ENCODE measurements at regions of chr9 and their contacts with region 1.

Region 1: DNA sequence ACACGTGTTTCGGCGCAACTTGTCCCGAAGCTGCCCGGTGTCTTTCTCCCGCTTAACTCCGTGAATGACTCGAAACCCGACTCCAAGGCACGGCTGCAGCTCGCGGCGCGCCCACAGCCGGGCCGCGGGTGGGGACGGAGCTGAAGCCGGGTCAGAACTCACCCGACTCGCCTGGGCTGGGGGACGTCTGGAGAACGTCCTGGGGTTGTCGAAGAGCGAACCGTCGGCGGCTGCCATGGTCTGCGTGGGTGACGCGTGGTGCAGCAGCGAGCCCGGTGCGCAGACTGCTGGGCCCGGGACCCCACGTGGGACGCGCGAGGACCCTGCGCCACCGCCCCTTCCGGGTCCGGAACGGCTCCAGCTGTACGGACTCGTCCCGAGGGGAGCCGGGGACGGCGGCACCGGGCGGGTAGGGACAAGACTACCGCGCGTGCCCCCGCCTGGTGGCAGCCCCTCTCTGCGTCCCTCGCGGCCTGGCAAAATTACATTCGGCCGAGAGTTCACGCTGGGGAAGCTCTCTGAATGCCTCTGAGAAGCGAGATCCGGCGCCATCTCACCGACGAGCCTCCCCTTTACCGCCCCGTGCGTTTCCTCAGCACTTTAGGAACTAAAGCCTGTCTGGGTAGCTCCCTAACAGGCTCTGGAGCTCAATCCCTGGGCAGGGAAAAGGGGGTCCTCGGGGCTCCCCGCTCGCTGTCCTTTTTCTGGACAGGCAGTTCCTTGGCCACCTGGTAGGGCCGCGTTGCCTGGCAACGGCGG is at the start of gene DDX31:
- DNase-seq: peak; percentile 76 to 95 (median 88)
- ATAC-seq: peak; percentile 87 to 88
- H3K4me3 Mint-ChIP-seq: peak within 1 kb of the TSS; percentile 86 to 95 (median 90)
- H3K27ac Mint-ChIP-seq: peak within 1 kb of the TSS; percentile 80 to 97 (median 96)
- H3K4me1 Mint-ChIP-seq: peaks cover 28 to 70% (median 58%) of the 10 kb centered on the region in 4 donors
- H3K27me3 Mint-ChIP-seq: no peaks in the 10 kb centered on the region
- polyA plus RNA-seq, gene DDX31: 6.2 to 9.7 (median 7.6) TPM

Region 2: DNA sequence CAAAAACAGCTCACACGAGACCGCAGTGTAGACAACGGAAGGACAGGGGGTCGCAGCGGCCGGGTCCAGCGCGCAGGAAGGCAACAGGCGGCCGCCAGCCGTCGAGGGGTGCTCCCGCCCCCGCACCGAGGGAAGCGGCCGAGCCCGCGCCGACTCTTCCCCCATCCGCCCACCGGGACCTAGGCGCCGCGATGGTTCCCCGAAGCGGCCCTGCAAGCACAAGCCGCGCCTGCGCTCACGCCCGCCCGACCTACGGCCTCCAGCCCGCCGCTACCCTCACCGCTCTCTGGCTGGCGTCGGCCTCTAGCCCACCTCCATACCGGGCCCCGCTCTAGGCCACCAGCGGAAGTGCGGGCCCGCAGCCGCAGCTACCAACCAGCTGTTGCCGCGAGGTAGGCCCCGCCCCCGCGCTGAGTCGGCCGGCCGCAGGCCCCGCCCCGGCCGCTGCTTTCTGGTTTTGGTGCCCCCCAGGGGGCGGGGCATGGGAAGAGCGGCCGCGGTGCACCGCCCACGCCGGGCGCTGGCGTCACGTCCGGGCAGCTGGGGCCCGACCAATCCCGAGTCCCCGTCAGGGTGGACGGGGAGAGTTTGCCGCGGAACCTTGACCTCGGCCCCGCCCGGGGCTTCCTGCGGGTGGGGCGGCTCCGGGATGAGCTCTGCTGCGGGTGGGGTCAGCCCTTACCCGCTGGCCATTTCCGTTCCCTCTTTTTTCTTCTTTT is 315.1 kb before region 1 on chr9 and contains the start of gene SETX:
- POLR2A ChIA-PET with region 1: interaction called, 10 read pairs
- DNase-seq: peak; percentile 84 to 97 (median 92)
- ATAC-seq: peak; percentile 86 to 89
- H3K4me3 Mint-ChIP-seq: peak within 1 kb of the TSS; percentile 66 to 96 (median 92)
- H3K27ac Mint-ChIP-seq: peak within 1 kb of the TSS; percentile 95 to 99 (median 97)
- H3K4me1 Mint-ChIP-seq: peaks cover 20 to 47% (median 41%) of the 10 kb centered on the region in 4 donors
- H3K27me3 Mint-ChIP-seq: peaks cover 0 to 1% (median 0%) of the 10 kb centered on the region in 5 donors
- polyA plus RNA-seq, gene SETX: 21.4 to 29.1 (median 25.9) TPM

Region 3: DNA sequence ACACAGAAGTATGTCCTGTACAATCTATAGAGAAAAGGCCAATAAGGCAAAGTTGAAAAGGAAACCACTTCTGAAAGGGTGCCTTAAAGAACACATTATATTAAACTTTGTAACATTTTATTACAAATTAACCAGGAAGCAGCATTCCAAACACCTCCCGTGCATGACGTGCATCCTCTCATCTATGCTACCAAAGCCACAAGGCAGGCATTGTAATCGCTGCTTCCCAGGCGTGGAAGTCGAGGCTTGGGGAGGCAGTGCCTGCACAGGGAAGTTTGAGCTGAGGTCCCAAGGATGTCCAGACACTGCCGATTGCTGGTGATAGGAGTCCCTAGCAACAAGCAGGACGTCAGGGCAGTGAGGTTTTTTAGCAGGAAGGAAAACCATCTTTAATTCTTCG is 131.8 kb before region 1 on chr9:
- POLR2A ChIA-PET with region 1: no interaction called
- DNase-seq: no peak
- ATAC-seq: no peak
- H3K4me3 Mint-ChIP-seq: no peak overlapping the region
- H3K27ac Mint-ChIP-seq: no peak overlapping the region
- H3K4me1 Mint-ChIP-seq: no peaks in the 10 kb centered on the region
- H3K27me3 Mint-ChIP-seq: peaks cover 0 to 8% (median 3%) of the 10 kb centered on the region in 5 donors

Region 4: DNA sequence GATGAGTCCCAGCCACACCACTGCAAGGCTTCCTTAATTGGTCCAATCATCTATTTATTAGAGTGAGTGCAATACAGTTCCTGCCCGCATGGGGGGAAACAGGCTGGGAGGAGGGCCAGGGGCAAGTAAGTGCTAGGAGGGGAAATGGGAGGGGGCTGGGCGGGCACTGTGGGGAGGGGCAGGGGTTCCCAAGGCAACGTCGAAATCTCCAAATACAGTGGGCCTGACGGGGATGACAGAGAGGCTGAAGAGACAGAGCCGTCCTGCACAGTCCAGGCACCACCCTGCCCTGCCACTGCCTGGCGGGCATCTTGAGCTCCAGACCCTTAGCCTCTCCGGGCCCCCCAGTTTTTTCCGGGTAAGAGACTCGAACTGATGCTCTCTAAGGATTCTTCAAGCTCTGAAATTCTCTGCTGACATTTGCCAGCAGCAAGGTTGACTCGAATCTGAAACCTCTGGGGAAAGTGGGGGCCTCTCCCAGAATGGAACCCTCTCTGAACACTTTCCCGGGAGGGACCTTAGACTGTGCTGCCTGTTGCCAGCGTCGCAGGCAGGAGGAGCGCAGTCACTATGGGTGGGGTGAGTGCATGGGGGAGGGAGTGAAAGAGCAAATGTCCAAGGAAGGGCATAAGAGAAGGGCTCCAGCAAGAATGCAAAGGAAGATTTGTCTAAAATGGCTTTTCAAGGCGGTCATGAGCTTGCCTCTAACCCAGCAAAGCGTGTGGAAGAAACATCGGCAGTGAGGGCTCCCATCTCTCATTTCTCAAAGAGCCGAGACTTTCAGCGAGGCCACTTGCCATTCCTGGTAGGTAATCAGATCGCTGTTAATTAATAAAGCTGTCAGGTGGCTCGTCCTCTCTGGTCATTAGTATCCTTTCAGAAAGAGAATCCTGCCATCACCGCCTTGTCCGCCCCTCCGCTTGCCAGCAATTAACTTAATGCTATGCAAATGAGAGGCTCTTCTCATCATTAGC is 99.3 kb after region 1 on chr9:
- POLR2A ChIA-PET with region 1: interaction called, 15 read pairs
- DNase-seq: peak; percentile 48 to 83 (median 62)
- ATAC-seq: peak; percentile 67 to 73
- H3K4me3 Mint-ChIP-seq: peak overlapping the region; percentile 96 to 100 (median 99)
- H3K27ac Mint-ChIP-seq: peak overlapping the region; percentile 89 to 99 (median 98)
- H3K4me1 Mint-ChIP-seq: peaks cover 13 to 26% (median 20%) of the 10 kb centered on the region in 4 donors
- H3K27me3 Mint-ChIP-seq: peaks cover 0 to 2% (median 0%) of the 10 kb centered on the region in 5 donors

Region 5: DNA sequence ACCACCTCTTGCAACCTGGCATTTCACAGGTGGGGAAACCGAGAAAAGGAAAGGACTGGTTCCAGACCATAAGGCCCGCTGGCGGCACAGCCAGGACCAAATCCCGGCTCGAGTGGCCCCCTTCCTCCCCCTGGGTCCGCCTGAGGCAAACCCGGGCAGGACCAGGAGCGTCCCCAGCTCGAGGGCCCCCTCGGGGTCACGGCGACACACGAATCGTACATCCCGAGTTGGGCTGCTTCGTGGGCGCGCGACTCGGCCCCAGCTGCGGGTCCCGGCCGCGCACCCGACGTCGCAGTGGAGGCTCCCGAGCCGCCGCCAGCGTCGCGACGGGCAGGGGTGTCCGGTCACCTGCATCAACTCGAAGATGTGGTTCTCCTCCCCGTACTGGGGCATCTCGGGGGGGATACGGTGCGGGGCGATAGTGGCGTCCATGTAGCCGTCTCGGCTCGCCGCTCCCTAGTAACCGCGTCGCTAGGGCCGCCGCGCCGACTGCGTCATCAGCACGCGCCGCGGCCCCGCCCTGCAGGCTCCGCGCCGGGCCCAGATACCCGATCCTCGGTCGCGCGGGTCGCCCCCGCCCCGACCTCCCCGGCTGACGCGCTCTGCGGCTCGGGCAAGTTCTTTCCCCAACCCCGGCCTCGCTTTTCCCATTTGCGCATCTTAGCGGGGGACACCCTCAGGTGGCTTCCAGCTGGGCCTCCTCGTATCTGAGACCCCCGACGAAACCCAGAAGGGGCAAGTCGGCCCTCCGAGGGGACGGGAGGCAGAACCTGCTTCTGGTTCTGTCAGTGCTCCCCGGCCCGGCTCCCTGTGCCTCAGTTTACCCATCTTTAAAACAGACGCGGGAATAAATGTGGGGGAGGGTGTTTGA is 208.2 kb after region 1 on chr9 and contains the start of gene AK8:
- POLR2A ChIA-PET with region 1: interaction called, 17 read pairs
- DNase-seq: peak; percentile 63 to 83 (median 79)
- ATAC-seq: peak; percentile 92
- H3K4me3 Mint-ChIP-seq: peak within 1 kb of the TSS; percentile 76 to 91 (median 82)
- H3K27ac Mint-ChIP-seq: peak within 1 kb of the TSS; percentile 59 to 90 (median 84)
- H3K4me1 Mint-ChIP-seq: peaks cover 0 to 17% (median 15%) of the 10 kb centered on the region in 4 donors
- H3K27me3 Mint-ChIP-seq: no peaks in the 10 kb centered on the region
- polyA plus RNA-seq, gene AK8: 0.14 TPM in 1 of 3 donors, not detected in the others